GM12878 (cell line): ENCODE measurements at regions of chr3 and their contacts with region 1.

Region 1: DNA sequence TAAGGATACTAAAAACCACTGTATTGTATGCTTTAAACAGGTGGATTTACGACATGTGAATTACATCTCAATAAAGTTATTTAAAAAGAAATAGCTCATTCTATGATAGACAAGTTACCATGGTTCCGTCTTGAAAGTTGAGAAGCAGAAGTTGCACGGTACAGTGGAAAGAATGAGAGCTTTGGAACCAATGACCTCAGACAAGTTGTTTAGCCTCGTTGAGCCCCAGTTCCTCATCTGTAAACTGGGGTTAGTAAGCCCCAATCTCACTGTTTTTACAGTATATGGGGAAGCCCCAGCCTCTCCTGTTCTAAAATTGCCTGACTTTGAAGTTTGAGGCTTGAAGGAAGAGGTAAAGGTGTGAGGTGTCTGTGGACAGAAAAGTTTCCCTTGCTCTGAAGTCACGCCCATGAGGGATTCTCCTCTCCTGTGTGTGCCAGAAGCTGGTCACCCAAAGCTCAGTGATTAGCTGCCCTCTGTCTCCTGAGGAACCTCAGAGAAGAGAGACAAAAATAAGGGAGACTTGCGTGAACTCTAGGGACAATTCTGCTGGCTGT is 10.0 kb downstream of the CRYGS start:
- DNase-seq: peak; percentile 95
- ATAC-seq: peak; percentile 87
- H3K4me3 ChIP-seq: peak overlapping the region; percentile 13; the same call in 1 of the 2 replicates
- H3K27ac ChIP-seq: peak overlapping the region; percentile 86
- H3K4me1 ChIP-seq: peaks cover 78% of the 10 kb centered on the region
- H3K27me3 ChIP-seq: no peaks in the 10 kb centered on the region
- CTCF ChIP-seq: no peak
- EP300 ChIP-seq: peak; percentile 88 to 89
- POLR2A ChIP-seq: no peak
- RAD21 ChIP-seq: 0 out of 2 replicates have a peak, but pooled peaks have one; percentile 12

Region 2: DNA sequence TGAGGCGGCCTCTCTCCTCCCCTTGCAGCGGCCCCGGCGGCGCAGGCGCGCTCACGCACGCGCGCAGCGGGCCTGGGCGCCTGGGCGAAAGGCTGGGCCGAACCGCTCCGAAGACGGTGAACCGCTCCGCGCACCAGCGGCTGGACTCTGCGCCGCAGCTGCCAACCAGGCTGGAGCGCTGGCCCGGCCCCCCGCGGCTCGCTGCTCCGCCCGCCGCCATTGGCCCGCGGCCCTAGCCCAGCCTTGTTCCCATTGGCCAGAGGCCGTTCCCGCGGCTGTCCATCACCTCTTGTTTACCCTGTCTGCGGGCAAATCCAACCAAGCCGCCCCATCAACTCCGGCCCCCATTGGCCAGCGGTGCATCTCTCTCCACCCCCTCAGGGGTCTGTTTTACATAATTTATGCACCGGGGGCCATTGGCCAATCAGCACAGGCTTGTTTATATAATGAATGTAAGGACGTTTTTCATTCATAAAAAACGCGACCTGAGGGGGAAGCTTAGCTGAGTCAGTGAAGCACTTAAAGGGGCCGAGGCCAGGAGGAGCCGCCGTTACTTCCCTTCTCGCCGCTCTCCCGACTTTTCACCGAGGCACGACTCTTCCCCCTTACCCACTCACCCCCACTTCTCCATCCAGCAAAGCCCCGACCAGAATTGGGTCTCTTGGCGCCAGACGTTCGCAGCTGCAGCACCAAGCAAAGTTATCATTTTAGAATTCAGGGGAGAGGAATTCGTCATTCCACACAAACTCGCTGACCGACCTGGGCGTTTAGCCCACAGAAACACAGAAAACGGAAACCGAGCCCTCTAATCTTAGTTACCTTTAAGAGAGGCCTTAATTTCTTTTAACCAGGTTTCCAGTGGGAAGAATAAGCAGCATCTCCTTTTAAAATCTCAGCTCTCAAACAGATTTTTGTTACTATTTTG is 425.0 kb before region 1 on chr3 and contains the start of gene ETV5:
- CTCF ChIA-PET with region 1: no interaction called
- POLR2A ChIA-PET with region 1: no interaction called
- RAD21 ChIA-PET with region 1: interaction called, 3 read pairs
- SMC1A ChIA-PET with region 1: no interaction called
- in situ Hi-C with region 1: no loop called
- intact Hi-C with region 1: loop called (anchors 10 kb)
- DNase-seq: peak; percentile 90
- ATAC-seq: peak; percentile 96
- H3K4me3 ChIP-seq: peak within 1 kb of the TSS; percentile 79
- H3K27ac ChIP-seq: peak within 1 kb of the TSS; percentile 46; the same call in 1 of the 2 replicates
- H3K4me1 ChIP-seq: peaks cover 24% of the 10 kb centered on the region
- H3K27me3 ChIP-seq: peaks cover 0 to 15% of the 10 kb centered on the region in 2 experiments; a peak in 2 of 4 replicates
- CTCF ChIP-seq: no peak
- EP300 ChIP-seq: no peak
- POLR2A ChIP-seq: peak; percentile 89
- RAD21 ChIP-seq: no peak
- polyA plus RNA-seq, gene ETV5: 5.0 to 5.4 TPM

Region 3: DNA sequence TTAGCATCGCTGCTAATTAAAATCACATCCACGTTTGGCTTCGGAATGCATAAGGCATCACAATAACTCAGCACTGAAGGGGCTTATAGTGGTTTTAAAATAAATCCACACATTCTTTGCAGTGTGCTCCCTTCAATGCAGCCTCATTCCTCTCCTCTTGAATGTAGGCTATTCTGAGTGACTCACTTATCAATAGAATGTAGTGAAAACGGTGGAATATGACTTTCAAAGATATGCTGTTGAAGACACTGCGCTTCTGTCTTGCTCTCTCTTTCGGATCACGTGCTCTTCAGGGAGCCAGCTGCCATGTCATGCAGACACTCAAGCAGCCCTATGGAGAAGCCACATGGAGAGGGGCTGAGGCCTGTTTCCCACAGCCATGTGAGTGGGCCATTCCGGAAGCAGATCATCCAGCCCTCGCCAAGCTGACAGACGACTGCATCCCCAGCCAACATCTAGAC is 77.4 kb before region 1 on chr3:
- CTCF ChIA-PET with region 1: interaction called, 12 read pairs
- POLR2A ChIA-PET with region 1: no interaction called
- RAD21 ChIA-PET with region 1: interaction called, 18 read pairs
- SMC1A ChIA-PET with region 1: interaction called, 28 read pairs
- in situ Hi-C with region 1: no loop called
- intact Hi-C with region 1: loop called (anchors 5 kb)
- DNase-seq: no peak
- ATAC-seq: no peak
- H3K4me3 ChIP-seq: no peak overlapping the region
- H3K27ac ChIP-seq: no peak overlapping the region
- H3K4me1 ChIP-seq: no peaks in the 10 kb centered on the region
- H3K27me3 ChIP-seq: peaks cover 0 to 2% of the 10 kb centered on the region in 2 experiments; a peak in 1 of 4 replicates
- CTCF ChIP-seq: no peak
- EP300 ChIP-seq: no peak
- POLR2A ChIP-seq: no peak
- RAD21 ChIP-seq: no peak

Region 4: GRCh38 chr3:186514296-186515002 is 19.7 kb before region 1 on chr3:
- CTCF ChIA-PET with region 1: interaction called, 282 read pairs
- POLR2A ChIA-PET with region 1: interaction called, 25 read pairs
- RAD21 ChIA-PET with region 1: interaction called, 224 read pairs
- SMC1A ChIA-PET with region 1: interaction called, 429 read pairs
- in situ Hi-C with region 1: no loop called
- intact Hi-C with region 1: loop called (anchors 2 kb)
- DNase-seq: no peak
- ATAC-seq: no peak
- H3K4me3 ChIP-seq: no peak overlapping the region
- H3K27ac ChIP-seq: no peak overlapping the region
- H3K4me1 ChIP-seq: peaks cover 59% of the 10 kb centered on the region
- H3K27me3 ChIP-seq: no peaks in the 10 kb centered on the region
- CTCF ChIP-seq: peak; percentile 15 to 54 (median 49); a peak in 4 of 6 replicates
- EP300 ChIP-seq: no peak
- POLR2A ChIP-seq: no peak
- RAD21 ChIP-seq: peak; percentile 36; the same call in 1 of the 2 replicates

Region 5: DNA sequence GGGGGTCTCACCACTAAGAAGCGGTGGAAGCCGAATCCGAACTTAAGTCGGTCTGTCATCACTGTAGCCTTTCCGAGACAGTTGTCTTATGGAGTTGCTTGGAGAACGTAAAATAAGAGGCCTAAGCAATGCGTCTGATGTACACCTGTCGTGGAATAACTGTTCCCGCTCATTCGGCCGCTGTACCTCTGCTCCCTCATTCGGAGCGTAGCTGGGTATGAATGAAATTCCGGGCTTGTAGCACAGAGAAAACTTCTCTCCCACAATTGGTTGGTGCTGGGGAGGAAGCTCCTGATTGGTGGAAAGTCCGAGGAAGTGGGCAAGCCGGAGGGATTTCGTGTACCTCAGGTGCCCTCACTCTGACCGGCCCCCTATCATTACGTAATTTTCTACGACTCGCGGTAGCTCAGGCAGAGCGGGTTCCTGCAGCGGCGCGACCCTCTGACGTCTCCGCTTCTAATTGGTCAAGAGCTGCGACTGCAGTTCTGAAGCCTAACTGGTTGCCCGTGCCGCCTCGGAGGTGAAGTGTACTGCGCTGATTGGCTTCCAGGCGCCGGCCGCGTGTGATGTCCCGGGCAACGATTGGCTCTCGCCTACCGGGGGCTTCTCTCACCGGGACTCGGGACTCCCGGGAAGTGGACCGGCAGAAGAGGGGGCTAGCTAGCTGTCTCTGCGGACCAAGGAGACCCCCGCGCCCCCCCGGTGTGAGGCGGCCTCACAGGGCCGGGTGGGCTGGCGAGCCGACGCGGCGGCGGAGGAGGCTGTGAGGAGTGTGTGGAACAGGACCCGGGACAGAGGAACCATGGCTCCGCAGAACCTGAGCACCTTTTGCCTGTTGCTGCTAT is 36.1 kb after region 1 on chr3 and contains the start of gene DNAJB11:
- CTCF ChIA-PET with region 1: interaction called, 17 read pairs
- POLR2A ChIA-PET with region 1: interaction called, 20 read pairs
- RAD21 ChIA-PET with region 1: interaction called, 28 read pairs
- SMC1A ChIA-PET with region 1: interaction called, 36 read pairs
- in situ Hi-C with region 1: no loop called
- intact Hi-C with region 1: no loop called
- DNase-seq: peak; percentile 98
- ATAC-seq: peak; percentile 90
- H3K4me3 ChIP-seq: peak within 1 kb of the TSS; percentile 90
- H3K27ac ChIP-seq: peak within 1 kb of the TSS; percentile 85
- H3K4me1 ChIP-seq: peaks cover 10% of the 10 kb centered on the region
- H3K27me3 ChIP-seq: no peaks in the 10 kb centered on the region
- CTCF ChIP-seq: no peak
- EP300 ChIP-seq: no peak
- POLR2A ChIP-seq: peak; percentile 92
- RAD21 ChIP-seq: no peak
- polyA plus RNA-seq, gene DNAJB11: 16.2 to 26.4 TPM